ENCODE measurements at regions of chr3 and their contacts with region 1.

Region 1: DNA sequence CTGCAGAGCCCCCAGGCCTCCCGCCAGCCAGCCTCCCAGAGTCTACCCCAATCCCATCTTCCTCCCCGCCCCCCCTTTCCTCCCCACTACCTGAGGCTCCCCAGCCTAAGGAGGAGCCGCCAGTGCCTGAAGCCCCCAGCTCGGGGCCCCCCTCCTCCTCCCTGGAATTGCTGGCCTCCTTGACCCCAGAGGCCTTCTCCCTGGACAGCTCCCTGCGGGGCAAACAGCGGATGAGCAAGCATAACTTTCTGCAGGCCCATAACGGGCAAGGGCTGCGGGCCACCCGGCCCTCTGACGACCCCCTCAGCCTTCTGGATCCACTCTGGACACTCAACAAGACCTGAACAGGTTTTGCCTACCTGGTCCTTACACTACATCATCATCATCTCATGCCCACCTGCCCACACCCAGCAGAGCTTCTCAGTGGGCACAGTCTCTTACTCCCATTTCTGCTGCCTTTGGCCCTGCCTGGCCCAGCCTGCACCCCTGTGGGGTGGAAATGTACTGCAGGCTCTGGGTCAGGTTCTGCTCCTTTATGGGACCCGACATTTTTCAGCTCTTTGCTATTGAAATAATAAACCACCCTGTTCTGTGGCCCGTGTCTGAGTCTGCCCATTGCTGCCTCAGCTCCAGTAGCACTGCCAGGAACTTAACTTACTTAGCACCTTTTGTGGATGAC is 32.2 kb downstream of the PTPN23 start:
- DNase-seq: no peak
- H3K4me3 ChIP-seq: no peak overlapping the region
- H3K27ac ChIP-seq: no peak overlapping the region
- H3K4me1 ChIP-seq: no peaks in the 10 kb centered on the region
- H3K27me3 ChIP-seq: no peaks in the 10 kb centered on the region
- CTCF ChIP-seq: peak in 1 of 5 experiments; percentile 6
- EP300 ChIP-seq: no peak
- POLR2A ChIP-seq: no peak

Region 2: DNA sequence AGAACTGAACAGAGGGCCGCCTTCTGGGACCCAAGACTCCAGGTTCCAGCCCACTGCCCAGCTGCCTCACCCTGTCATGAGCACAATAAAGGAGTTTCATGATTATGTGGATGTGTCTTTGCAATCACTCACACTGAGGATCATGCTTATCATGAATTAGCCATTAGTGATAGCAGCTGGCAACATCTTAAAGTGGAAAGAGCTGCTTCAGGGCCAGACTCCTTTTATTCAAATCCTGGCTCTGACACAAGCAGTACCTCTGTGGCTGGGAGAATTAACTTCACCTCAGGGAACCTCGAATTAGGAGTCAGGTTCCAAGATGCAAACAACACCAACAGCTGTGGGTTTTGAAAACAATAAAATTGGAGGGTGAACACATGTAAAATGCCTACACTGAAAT is 69.4 kb after region 1 on chr3:
- in situ Hi-C with region 1: loop called in 1 of 4 experiments (anchors 5 kb)
- intact Hi-C with region 1: no loop called
- DNase-seq: no peak
- H3K4me3 ChIP-seq: no peak overlapping the region
- H3K27ac ChIP-seq: no peak overlapping the region
- H3K4me1 ChIP-seq: no peaks in the 10 kb centered on the region
- H3K27me3 ChIP-seq: no peaks in the 10 kb centered on the region
- CTCF ChIP-seq: no peak
- EP300 ChIP-seq: no peak
- POLR2A ChIP-seq: no peak